ENCODE measurements at regions of chr17 and their contacts with region 1.

Region 1: DNA sequence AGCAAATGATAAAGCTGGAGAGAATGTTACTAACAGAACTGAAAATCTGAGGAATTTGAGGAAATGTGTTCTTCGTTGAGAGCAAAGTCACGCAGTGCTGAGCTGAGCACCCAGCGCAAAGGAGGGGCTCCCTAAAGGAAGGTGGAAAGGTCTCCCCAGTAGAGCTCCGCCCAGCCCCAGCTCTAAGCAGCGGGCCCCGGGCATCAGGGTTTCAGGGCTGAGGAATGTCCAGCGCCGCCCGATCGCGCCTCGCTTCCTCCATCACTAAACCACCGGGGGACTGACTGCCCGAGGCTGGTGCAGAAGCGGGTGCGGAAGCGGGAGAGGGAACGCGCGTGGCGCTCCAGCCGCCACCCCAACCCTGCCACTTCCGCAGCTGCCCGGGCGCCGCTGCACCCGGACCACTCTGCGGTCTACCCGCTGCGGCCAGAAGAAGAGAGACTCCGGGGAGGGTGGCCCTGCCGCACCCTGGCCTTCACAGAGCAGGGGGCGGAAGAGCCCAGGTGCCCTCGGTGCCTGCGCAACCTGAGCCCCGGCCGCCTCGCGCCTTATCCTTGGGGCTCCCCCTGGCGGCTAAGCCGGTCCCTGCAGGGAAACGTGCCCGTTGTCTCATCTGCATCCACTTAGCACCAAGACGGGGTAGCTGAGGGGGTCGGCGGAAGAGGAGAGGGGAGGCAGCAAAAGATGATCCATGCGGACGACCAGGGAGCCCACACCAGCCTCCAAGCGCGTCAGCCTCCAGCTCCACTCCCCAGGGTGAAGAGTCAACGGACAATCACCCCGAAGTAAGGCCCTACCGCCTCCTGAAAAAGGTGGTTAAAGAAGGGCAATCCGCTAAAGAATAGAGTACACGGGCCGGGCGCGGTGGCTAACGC is 12.4 kb upstream of the GUCY2D start:
- DNase-seq: peak; percentile 74 to 91 (median 85)
- H3K4me3 ChIP-seq: peak overlapping the region; percentile 41
- H3K27ac ChIP-seq: peak overlapping the region in 1 of 2 donors; percentile 33
- H3K4me1 ChIP-seq: no peaks in the 10 kb centered on the region
- H3K27me3 ChIP-seq: no peaks in the 10 kb centered on the region
- CTCF ChIP-seq: peak; percentile 91 to 99 (median 93)
- EP300 ChIP-seq: no peak
- POLR2A ChIP-seq: no peak

Region 2: DNA sequence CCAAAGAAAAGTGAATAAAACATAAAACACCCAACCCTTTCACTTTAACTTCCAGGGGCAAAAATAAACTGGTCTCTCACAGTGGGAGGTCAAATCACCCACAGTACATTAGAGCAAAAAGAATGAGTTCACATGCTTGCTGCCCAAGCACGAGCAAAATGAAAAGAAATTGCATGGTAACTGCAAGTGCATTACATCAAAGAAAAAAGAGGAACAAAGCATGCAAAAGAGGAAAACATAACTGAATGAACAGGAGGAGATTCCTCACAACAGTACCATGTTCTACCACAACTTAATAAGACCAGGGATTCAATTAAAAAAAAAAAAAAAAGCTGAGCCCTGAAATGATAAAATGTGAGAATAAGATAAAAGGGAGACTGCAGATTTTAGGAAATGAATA is 260.2 kb before region 1 on chr17:
- intact Hi-C with region 1: loop called in 1 of 4 experiments (anchors 10 kb)
- DNase-seq: no peak
- H3K4me3 ChIP-seq: no peak overlapping the region
- H3K27ac ChIP-seq: no peak overlapping the region
- H3K4me1 ChIP-seq: no peaks in the 10 kb centered on the region
- H3K27me3 ChIP-seq: no peaks in the 10 kb centered on the region
- CTCF ChIP-seq: no peak
- EP300 ChIP-seq: no peak
- POLR2A ChIP-seq: no peak

Region 3: DNA sequence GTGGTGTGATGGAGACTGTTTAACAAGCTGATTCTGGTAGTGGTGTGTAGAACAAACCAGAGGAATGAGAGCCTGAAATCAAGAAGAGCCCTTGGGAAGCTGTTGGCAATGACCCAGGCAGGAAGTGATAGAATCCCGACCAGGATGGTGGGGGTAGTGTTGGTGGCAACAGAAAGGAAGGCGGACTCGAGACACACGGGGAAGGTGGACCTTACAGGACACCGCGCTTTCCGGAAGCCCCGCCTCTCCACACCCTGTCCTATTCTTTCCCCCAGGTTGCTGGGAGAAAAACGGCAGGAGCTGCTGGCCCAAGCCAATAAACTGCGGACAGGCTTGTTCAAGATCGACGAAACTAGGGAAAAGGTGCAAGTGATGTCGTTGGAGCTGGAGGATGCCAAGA is 186.0 kb before region 1 on chr17:
- intact Hi-C with region 1: loop called in 1 of 4 experiments (anchors 10 kb)
- DNase-seq: no peak
- H3K4me3 ChIP-seq: no peak overlapping the region
- H3K27ac ChIP-seq: no peak overlapping the region
- H3K4me1 ChIP-seq: no peaks in the 10 kb centered on the region
- H3K27me3 ChIP-seq: no peaks in the 10 kb centered on the region
- CTCF ChIP-seq: no peak
- EP300 ChIP-seq: no peak
- POLR2A ChIP-seq: no peak

Region 4: GRCh38 chr17:7862692-7863437 is 127.2 kb before region 1 on chr17:
- intact Hi-C with region 1: loop called (anchors 2 to 10 kb)
- DNase-seq: peak; percentile 33 to 73 (median 52)
- H3K4me3 ChIP-seq: no peak overlapping the region
- H3K27ac ChIP-seq: no peak overlapping the region
- H3K4me1 ChIP-seq: peaks cover 3% of the 10 kb centered on the region
- H3K27me3 ChIP-seq: no peaks in the 10 kb centered on the region
- CTCF ChIP-seq: peak; percentile 56 to 80 (median 68)
- EP300 ChIP-seq: no peak
- POLR2A ChIP-seq: no peak

Region 5: DNA sequence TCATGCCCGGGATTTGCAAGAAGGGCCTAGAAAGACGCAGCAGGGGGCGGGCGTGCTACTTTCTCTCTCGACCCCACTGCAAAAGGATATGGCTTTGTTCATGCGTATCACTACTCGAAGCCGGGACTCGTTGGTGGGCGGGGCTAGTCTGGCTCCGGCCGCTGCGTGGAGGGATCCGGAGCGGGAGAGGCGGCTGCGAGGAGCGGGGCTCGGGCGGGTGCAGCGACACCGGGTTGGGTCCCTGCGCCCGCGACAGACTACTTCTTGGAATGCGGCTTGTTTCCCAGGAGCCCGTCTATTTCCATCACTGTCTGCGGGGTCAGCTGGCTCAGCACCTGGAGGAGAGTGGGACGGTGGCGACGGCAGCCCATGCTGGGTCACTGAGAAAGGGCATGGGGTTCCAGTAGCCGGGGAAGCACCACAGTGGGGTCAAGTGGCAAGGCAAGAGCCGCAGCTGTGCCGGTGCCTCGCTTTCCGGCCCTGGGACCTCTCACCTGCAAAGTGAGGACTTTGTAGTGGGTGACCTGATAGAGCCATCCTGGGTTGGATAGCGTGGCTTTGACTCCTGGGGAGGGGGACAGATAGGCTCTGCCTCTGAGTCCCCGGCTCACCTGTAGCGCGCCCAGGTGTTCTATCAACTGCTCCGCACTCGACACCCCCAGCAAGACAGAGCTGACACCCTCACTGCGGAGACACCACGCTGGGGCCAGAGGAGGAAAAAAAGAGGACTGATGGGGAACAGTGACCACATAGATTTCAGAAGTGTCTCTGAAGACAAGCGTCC is 67.0 kb before region 1 on chr17:
- intact Hi-C with region 1: loop called in 1 of 4 experiments (anchors 10 kb)
- DNase-seq: peak; percentile 89 to 93 (median 91)
- H3K4me3 ChIP-seq: peak overlapping the region; percentile 46
- H3K27ac ChIP-seq: peak overlapping the region in 1 of 2 donors; percentile 14
- H3K4me1 ChIP-seq: peaks cover 5% of the 10 kb centered on the region
- H3K27me3 ChIP-seq: no peaks in the 10 kb centered on the region
- CTCF ChIP-seq: no peak
- EP300 ChIP-seq: no peak
- POLR2A ChIP-seq: peak; percentile 74

Region 6: DNA sequence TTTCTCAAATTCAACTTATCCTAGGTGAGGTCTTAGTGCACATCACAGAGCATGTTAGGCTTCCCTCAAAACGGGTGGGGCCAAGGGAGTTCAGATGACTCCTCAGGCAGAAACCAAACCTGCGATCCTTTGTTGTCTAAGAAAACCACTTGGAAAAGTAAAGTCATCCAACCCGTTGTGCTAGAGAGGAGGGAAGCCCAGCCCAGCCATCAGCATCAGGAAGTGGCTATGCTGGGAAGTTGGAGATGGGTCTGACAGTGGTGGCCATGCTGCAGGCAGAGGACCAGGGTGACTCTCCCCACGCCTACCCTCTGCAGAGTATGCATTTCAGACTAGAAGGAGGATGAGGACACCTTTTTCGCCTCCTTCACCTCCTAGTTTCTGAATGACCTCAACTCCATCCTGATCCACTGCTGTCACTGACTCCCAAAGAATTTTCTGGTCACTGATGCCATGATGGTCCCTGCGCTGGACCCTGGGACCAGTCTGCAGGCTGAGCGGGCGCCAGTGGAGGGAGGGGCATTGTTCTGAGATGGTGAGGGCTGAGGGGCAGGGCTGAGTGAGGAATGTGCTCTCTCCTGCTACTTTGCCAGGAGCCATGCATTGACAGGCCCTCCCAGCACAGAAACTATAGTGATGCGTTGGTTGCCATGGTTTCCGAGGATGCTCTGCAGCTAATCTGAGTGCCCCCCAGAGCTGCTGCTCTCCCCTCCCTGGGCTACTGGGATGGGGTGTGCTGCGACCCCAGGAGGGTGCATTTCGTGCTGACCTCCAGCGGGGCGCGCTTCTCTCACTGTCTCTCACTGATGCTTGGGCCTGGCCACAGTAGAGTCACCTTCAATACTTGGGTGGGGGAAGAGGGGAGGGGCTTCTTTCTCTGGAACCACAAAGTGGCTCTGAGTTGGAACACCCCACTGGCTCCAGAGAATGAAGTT is 77.1 kb after region 1 on chr17:
- intact Hi-C with region 1: no loop called
- DNase-seq: no peak
- H3K4me3 ChIP-seq: no peak overlapping the region
- H3K27ac ChIP-seq: no peak overlapping the region
- H3K4me1 ChIP-seq: no peaks in the 10 kb centered on the region
- H3K27me3 ChIP-seq: no peaks in the 10 kb centered on the region
- CTCF ChIP-seq: no peak
- EP300 ChIP-seq: no peak
- POLR2A ChIP-seq: no peak

Region 7: GRCh38 chr17:8138672-8139371 is 148.8 kb after region 1 on chr17:
- intact Hi-C with region 1: no loop called
- DNase-seq: peak; percentile 93 to 98 (median 96)
- H3K4me3 ChIP-seq: peak overlapping the region; percentile 0
- H3K27ac ChIP-seq: peak overlapping the region; percentile 49 to 84
- H3K4me1 ChIP-seq: no peaks in the 10 kb centered on the region
- H3K27me3 ChIP-seq: no peaks in the 10 kb centered on the region
- CTCF ChIP-seq: peak; percentile 90 to 96 (median 95)
- EP300 ChIP-seq: no peak
- POLR2A ChIP-seq: peak; percentile 38